Aorta (tissue), 5 donors: ENCODE measurements at regions of chr18 and their contacts with region 1.

Region 1: GRCh38 chr18:5237723-5238370 is 40.8 kb upstream of the AKAIN1 start:
- DNase-seq: peak; percentile 93 to 95
- ATAC-seq: peak; percentile 100
- H3K4me3 ChIP-seq: peak overlapping the region; percentile 69 to 91
- H3K27ac ChIP-seq: peak overlapping the region; percentile 89 to 98
- H3K4me1 ChIP-seq: peaks cover 0 to 5% of the 10 kb centered on the region in 2 donors
- H3K27me3 ChIP-seq: no peaks in the 10 kb centered on the region

Region 2: GRCh38 chr18:5015213-5015711 is 222.6 kb before region 1 on chr18:
- intact Hi-C with region 1: no loop called
- DNase-seq: no peak
- ATAC-seq: no peak
- H3K4me3 ChIP-seq: no peak overlapping the region
- H3K27ac ChIP-seq: no peak overlapping the region
- H3K4me1 ChIP-seq: no peaks in the 10 kb centered on the region
- H3K27me3 ChIP-seq: no peaks in the 10 kb centered on the region

Region 3: GRCh38 chr18:5295981-5296705 is 58.3 kb after region 1 on chr18:
- intact Hi-C with region 1: loop called (anchors 1 to 2 kb)
- DNase-seq: peak; percentile 97 to 99
- ATAC-seq: peak; percentile 94
- H3K4me3 ChIP-seq: peak overlapping the region; percentile 74 to 100
- H3K27ac ChIP-seq: peak overlapping the region; percentile 83 to 98
- H3K4me1 ChIP-seq: no peaks in the 10 kb centered on the region
- H3K27me3 ChIP-seq: no peaks in the 10 kb centered on the region